Activated CD4-positive, alpha-beta T cell treated with anti-CD3 and anti-CD28 coated beads, Interleukin-2, amount 10 ng/mL, durations not matched to agents 24 days and 14 days (primary cell): ENCODE measurements at regions of chr7 and their contacts with region 1.

Region 1: DNA sequence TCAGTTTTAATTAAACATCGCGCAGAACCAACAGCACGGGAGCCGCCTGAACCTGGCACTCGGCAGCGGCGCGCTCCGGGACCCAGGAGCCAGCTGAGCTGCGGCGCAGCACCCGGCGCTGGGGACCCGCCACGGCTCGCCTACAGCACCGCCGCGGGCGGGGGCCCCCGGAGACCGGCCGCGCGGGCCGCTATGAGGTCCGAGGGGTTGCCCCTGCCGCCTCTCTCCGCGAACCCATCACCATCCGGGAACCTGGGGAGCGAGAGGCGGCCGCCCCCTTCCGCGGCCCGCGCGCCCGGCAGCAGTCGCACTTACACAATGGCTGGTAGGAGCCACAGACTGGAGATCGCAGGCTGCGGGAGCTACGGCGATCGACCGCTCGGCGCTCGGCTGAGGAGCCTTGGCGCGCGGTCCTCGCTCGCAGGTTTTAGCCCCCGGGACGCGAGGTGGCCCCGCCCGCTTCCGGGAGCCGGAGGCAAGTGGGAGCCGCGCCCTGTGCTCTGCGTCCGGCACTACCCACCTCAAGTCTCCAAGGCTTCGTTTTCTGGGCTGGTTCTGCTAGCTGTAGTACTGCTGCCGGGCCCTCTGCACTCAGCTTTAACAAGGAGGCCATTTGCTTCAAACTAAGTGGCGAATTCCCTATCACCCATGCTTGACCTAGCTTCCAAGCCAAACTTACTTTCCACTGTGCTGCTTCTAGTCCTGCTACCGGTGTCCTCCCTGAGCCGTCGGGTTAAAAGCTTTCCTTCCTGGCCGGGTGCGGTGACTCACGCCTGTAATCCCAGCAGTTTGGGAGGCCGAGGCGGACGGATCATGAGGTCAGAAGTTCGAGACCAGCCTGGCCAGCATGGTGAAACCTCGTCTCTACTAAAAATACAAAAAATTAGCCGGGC is at the start of gene TPK1:
- DNase-seq: peak; percentile 97
- H3K4me3 Mint-ChIP-seq: peak within 1 kb of the TSS; percentile 96
- H3K27ac Mint-ChIP-seq: peak within 1 kb of the TSS; percentile 100
- H3K4me1 Mint-ChIP-seq: peaks cover 35% of the 10 kb centered on the region
- H3K27me3 Mint-ChIP-seq: no peaks in the 10 kb centered on the region
- total RNA-seq, gene TPK1: 13.1 and 13.2 TPM in 2 replicates

Region 2: GRCh38 chr7:143901668-143902331 is 934.1 kb before region 1 on chr7 and contains the start of gene TCAF1:
- intact Hi-C with region 1: loop called (anchors 5 kb)
- DNase-seq: peak; percentile 95
- H3K4me3 Mint-ChIP-seq: peak within 1 kb of the TSS; percentile 91
- H3K27ac Mint-ChIP-seq: peak within 1 kb of the TSS; percentile 89
- H3K4me1 Mint-ChIP-seq: peaks cover 23% of the 10 kb centered on the region
- H3K27me3 Mint-ChIP-seq: no peaks in the 10 kb centered on the region
- total RNA-seq, gene TCAF1: 12.6 and 13.5 TPM in 2 replicates

Region 3: GRCh38 chr7:144738708-144739314 is 97.1 kb before region 1 on chr7:
- intact Hi-C with region 1: loop called (anchors 5 kb)
- DNase-seq: peak; percentile 72
- H3K4me3 Mint-ChIP-seq: no peak overlapping the region
- H3K27ac Mint-ChIP-seq: no peak overlapping the region
- H3K4me1 Mint-ChIP-seq: peaks cover 2% of the 10 kb centered on the region
- H3K27me3 Mint-ChIP-seq: no peaks in the 10 kb centered on the region

Region 4: DNA sequence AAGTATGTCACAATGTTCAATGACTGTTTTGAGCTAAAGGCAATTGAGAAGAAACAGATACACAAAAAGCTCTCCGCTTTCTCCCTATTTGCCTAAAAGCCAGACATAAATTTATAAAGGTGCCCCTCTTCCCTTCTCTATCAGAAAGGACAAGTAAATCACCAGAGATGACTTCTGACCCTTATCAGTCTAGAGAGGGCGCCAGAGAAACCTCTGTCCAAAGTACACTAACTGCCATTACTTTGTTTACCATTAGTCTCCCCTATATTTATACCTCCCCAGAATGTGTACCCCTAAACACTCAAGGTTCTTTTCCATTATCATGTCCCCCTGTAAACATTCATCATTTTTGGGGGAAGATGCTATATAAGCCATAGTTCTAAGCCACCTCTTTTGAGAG is 49.4 kb before region 1 on chr7:
- intact Hi-C with region 1: loop called (anchors 10 kb)
- DNase-seq: peak; percentile 63
- H3K4me3 Mint-ChIP-seq: no peak overlapping the region
- H3K27ac Mint-ChIP-seq: no peak overlapping the region
- H3K4me1 Mint-ChIP-seq: peaks cover 5% of the 10 kb centered on the region
- H3K27me3 Mint-ChIP-seq: no peaks in the 10 kb centered on the region

Region 5: DNA sequence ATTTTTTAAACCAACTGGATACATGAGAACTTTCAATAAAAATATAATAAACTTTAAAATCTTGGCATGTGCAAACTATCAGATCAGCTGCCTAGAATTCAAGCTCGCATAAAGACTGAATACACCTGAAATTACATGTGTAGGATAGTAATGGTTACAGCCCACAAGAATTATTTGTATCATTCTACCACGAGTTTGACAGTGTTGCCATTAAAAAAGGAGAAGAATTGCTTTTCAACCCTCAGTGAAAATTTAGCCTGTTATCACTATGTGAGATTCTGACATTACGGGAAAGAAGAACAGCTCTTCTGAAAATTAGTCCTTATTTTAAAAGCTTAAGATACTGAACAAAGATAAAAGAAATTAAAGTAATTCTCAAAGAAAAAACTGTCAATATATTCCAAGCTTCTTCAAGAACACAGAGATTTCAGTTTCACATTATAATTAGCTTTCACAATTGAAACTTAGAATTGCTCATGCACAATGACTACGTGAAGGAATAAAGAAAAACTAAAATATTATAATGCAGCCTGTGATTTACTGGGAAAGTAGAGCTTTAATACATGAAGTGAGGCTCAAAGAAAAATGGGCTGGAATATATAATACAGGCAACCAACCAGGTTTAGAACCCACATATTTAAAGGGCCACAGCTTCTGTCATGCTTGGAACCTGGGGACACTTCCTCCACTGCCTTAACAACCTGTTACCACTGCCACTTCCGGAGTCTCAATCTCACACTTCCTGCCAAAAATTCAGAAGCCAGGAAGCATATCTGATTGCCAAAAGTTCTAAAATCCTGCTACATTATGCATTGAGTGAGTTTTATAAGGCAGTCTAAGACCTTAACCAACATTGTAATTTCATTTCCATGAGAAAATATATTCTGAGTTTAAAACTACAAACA is 23.3 kb before region 1 on chr7:
- intact Hi-C with region 1: loop called (anchors 1 kb)
- DNase-seq: peak; percentile 85
- H3K4me3 Mint-ChIP-seq: peak overlapping the region; percentile 76
- H3K27ac Mint-ChIP-seq: peak overlapping the region; percentile 88
- H3K4me1 Mint-ChIP-seq: peaks cover 32% of the 10 kb centered on the region
- H3K27me3 Mint-ChIP-seq: no peaks in the 10 kb centered on the region

Region 6: GRCh38 chr7:144821067-144821466 is 14.8 kb before region 1 on chr7:
- intact Hi-C with region 1: loop called (anchors 1 kb)
- DNase-seq: peak; percentile 64
- H3K4me3 Mint-ChIP-seq: peak overlapping the region; percentile 63
- H3K27ac Mint-ChIP-seq: peak overlapping the region; percentile 92
- H3K4me1 Mint-ChIP-seq: peaks cover 59% of the 10 kb centered on the region
- H3K27me3 Mint-ChIP-seq: no peaks in the 10 kb centered on the region

Region 7: DNA sequence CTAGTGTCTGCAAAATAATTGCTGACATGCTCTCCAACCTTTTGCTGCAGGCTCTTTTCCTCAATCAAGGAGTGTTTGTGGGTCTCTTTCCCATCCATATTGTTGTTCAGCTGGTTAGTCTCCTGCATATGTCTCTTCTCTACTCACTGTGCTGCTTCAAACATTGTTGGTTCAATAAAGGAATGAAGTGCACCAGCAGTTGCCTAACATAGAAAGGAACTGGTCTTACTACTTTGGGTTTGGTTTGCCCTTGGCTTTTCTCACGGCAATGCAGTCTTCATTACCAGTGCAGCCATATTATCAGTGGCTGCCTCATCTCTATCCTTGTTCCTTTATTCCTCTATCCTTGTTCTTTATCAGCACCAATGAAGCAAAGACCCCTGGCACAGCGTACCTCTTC is 169.7 kb after region 1 on chr7:
- intact Hi-C with region 1: no loop called
- DNase-seq: no peak
- H3K4me3 Mint-ChIP-seq: no peak overlapping the region
- H3K27ac Mint-ChIP-seq: no peak overlapping the region
- H3K4me1 Mint-ChIP-seq: no peaks in the 10 kb centered on the region
- H3K27me3 Mint-ChIP-seq: no peaks in the 10 kb centered on the region

Region 8: DNA sequence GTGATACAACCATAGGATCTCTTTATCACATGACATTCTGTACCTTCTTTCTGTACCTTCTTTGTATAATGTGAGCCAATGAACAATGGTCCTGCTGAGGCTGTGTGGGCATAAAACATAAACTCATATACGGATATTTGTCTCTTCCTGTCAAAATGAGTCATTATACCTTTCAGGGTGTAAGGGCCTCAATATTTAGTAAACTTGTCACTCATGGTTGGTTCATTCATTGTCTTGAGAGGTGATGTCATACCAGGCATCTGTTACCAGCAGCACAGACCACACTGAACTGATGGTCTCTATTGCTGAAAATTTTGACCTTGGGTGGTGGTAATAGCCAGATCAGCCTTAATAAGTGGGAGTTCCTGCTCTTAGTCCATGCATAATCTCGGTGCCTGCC is 287.6 kb after region 1 on chr7:
- intact Hi-C with region 1: no loop called
- DNase-seq: no peak
- H3K4me3 Mint-ChIP-seq: no peak overlapping the region
- H3K27ac Mint-ChIP-seq: no peak overlapping the region
- H3K4me1 Mint-ChIP-seq: no peaks in the 10 kb centered on the region
- H3K27me3 Mint-ChIP-seq: no peaks in the 10 kb centered on the region